Colonic mucosa (tissue), 4 donors: ENCODE measurements at regions of chr12 and their contacts with region 1.

Region 1: DNA sequence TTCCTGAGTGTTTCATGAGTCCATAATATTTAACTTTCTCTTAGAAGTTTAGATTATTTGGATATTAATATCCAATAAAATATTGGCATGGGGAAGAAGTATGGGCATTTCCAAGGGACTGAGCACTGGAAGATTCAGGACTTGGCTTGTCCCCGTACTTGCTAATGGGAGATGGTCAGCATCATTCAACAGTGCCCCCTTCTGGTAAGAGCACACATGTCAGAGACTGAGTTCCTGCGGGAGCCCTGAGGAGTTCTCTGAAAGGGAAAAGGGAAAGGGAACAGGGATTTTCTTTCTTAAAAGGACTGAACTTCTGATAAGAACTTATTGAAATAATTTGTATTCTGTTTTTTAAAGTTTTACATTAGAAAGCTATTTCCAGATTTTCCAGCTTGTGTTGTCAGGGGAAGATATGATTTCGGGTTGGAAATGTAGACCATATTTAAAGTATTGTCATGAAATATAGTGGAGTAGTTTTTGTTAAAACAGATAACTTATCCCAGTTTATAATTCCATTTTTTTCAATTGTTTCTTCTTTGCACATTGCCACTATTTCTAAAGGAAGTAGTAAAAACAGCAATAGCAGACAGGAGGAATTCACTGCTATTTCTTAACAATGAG is 59.8 kb upstream of the C12orf71 start:
- DNase-seq: peak; percentile 74
- H3K4me3 ChIP-seq: no peak overlapping the region
- H3K27ac ChIP-seq: no peak overlapping the region
- H3K4me1 ChIP-seq: no peaks in the 10 kb centered on the region
- H3K27me3 ChIP-seq: no peaks in the 10 kb centered on the region
- CTCF ChIP-seq: peak; percentile 83

Region 2: GRCh38 chr12:27025116-27025515 is 117.1 kb before region 1 on chr12:
- intact Hi-C with region 1: loop called (anchors 5 kb)
- DNase-seq: no peak
- H3K4me3 ChIP-seq: no peak overlapping the region
- H3K27ac ChIP-seq: no peak overlapping the region
- H3K4me1 ChIP-seq: peaks cover 5% of the 10 kb centered on the region
- H3K27me3 ChIP-seq: no peaks in the 10 kb centered on the region
- CTCF ChIP-seq: no peak

Region 3: DNA sequence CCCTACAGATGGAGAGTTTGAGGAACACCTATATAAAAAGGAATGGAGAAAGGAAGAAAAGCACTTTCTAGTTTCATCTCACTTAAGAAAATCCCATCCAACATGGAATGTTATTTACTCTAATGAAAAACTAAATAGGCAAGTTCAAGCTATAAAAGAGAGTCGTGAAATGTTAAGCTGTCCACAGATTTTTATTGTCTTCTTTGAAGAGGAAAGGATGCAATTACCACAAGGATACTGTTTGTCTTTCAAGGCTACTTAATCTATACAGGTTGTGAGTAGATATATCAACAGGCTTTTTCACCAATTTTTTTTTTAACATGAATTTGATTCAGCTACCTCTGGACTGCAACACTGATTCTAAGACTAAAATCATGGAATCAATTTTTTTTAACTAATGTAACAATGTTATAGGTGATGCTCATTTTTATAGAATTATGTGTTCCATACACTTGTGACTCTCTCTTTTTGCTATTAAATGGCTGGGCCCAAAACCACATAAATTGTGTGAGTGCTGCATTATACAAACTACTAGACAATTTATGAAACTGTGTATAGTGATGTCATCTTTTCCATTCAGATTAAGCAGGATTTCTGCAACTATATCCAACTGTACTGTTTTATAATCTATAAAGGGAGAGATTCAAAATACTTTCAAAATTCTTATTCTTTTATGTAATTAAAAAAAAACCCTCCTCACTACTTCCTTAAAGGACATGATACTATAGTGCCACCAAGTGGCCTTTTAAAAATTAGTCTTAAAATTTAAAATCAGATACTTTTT is 163.7 kb after region 1 on chr12:
- intact Hi-C with region 1: loop called (anchors 10 kb)
- DNase-seq: no peak
- H3K4me3 ChIP-seq: no peak overlapping the region
- H3K27ac ChIP-seq: no peak overlapping the region
- H3K4me1 ChIP-seq: no peaks in the 10 kb centered on the region
- H3K27me3 ChIP-seq: no peaks in the 10 kb centered on the region
- CTCF ChIP-seq: peak; percentile 58